Esophagus muscularis mucosa (tissue), 4 donors: ENCODE measurements at regions of chr5 and their contacts with region 1.

Region 1: GRCh38 chr5:157743163-157744050 is at the start of gene LSM11:
- DNase-seq: peak; percentile 97
- H3K4me3 ChIP-seq: peak within 1 kb of the TSS; percentile 88 to 99 (median 95)
- H3K27ac ChIP-seq: peak within 1 kb of the TSS; percentile 89 to 96 (median 92)
- H3K4me1 ChIP-seq: peaks cover 11 to 48% (median 45%) of the 10 kb centered on the region in 4 donors
- H3K27me3 ChIP-seq: no peaks in the 10 kb centered on the region
- CTCF ChIP-seq: peak in 2 of 3 experiments; percentile 99
- EP300 ChIP-seq: no peak
- POLR2A ChIP-seq: no peak
- total RNA-seq, gene LSM11: 22.4 to 53.7 (median 33.7) TPM

Region 2: DNA sequence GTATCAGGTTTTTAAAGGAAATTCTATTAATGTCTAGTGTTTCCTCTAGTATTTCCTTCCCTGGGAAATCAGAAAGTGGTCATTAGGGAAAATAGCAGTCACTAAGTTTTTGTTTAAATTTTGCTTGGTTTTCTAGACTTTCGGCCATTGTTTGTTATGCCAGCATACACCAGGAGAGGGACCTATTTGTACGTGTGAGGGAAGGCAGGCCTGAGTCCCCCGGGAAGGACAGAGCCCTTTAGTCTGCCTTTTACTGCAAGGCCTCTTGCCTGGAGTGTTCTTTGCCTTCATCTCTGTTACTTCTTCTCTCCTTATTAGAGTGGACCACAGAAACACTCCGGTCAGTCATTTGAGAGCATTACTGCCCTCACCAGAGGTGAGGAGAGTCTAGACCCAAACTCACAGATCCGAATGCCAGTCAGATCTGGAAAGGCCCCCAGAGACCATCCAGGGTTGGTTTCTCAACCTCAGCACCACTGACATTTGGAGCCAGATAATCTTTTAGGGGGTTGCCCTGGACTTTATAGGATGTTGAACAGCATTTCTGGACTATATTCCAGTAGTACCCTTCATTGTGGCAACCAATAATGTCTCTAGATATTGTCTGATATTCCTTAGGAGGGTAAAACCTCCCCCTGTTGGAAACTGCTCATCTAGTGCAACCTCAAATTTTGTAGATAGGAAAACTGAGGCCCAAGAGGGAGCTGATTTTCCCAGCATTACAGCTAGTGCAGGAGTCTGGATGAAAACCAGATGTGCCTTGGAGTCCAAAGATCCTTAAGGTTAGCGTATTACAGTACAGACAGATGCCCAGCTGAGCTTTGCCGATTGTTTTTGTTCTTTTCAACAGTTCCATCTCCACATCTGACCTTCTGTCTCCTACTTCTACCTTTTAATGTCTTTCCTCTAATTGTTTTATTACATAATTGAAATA is 376.4 kb before region 1 on chr5:
- intact Hi-C with region 1: loop called (anchors 10 kb)
- DNase-seq: no peak
- H3K4me3 ChIP-seq: no peak overlapping the region
- H3K27ac ChIP-seq: peak overlapping the region; percentile 57 to 85 (median 78)
- H3K4me1 ChIP-seq: peaks cover 1 to 55% (median 43%) of the 10 kb centered on the region in 4 donors
- H3K27me3 ChIP-seq: no peaks in the 10 kb centered on the region
- CTCF ChIP-seq: peak; percentile 66 to 75 (median 73)
- EP300 ChIP-seq: no peak
- POLR2A ChIP-seq: no peak

Region 3: DNA sequence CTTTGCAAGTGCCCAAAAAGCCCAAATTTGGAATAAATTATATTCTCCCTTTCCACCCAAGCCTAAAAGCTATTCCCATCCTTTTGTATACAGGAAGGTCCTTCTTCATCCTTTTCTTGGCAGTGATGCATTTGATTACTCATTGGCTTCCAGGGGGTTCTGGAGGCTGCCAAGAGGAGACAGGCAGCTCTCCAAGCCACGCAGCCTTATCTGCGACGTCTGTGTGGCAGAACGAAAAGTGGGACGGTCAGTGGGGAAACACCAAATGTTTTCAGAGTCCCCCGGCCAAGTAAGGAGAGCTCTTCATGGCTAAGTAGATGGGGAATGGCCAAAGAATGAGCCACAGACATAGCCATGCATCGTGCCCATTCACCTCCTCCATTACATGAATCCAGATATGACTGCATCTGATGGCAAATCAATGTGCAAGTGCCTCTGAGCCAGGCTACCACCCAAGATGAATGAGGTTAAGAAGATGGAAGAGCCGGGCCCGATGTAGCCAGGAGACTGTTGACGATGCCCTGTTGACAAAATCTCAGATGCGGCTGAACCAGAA is 180.0 kb before region 1 on chr5:
- intact Hi-C with region 1: loop called (anchors 10 kb)
- DNase-seq: no peak
- H3K4me3 ChIP-seq: no peak overlapping the region
- H3K27ac ChIP-seq: peak overlapping the region; percentile 85 to 90 (median 88)
- H3K4me1 ChIP-seq: peaks cover 59 to 97% (median 90%) of the 10 kb centered on the region in 4 donors
- H3K27me3 ChIP-seq: no peaks in the 10 kb centered on the region
- CTCF ChIP-seq: no peak
- EP300 ChIP-seq: peak; percentile 38
- POLR2A ChIP-seq: no peak

Region 4: DNA sequence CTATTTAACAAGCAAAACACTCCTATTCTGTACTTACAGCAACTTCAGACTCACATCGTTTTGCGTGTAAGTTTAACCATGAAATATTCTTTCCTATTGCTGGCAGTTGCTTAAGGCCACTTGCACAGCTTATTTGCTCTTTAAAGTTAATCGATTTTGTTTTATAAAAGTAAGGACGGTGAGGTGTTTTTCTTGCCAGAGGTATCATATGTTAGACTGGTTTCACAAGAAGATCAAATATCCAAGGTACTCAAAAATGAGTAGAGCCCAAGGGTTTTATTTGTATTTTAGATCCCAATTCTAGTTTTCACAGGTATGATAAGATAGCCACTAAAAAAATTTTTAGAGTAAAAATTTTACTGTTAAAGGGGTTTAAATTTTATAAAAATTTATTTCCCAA is 99.4 kb after region 1 on chr5:
- intact Hi-C with region 1: no loop called
- DNase-seq: no peak
- H3K4me3 ChIP-seq: no peak overlapping the region
- H3K27ac ChIP-seq: no peak overlapping the region
- H3K4me1 ChIP-seq: peaks cover 0 to 7% (median 5%) of the 10 kb centered on the region in 4 donors
- H3K27me3 ChIP-seq: no peaks in the 10 kb centered on the region
- CTCF ChIP-seq: no peak
- EP300 ChIP-seq: no peak
- POLR2A ChIP-seq: no peak

Region 5: GRCh38 chr5:158013939-158014338 is 270.5 kb after region 1 on chr5:
- intact Hi-C with region 1: no loop called
- DNase-seq: no peak
- H3K4me3 ChIP-seq: no peak overlapping the region
- H3K27ac ChIP-seq: no peak overlapping the region
- H3K4me1 ChIP-seq: peaks cover 0 to 13% (median 8%) of the 10 kb centered on the region in 4 donors
- H3K27me3 ChIP-seq: no peaks in the 10 kb centered on the region
- CTCF ChIP-seq: peak in 1 of 3 experiments; percentile 14
- EP300 ChIP-seq: no peak
- POLR2A ChIP-seq: no peak